Endothelial cell of umbilical vein (primary cell): ENCODE measurements at regions of chr14 and their contacts with region 1.

Region 1: DNA sequence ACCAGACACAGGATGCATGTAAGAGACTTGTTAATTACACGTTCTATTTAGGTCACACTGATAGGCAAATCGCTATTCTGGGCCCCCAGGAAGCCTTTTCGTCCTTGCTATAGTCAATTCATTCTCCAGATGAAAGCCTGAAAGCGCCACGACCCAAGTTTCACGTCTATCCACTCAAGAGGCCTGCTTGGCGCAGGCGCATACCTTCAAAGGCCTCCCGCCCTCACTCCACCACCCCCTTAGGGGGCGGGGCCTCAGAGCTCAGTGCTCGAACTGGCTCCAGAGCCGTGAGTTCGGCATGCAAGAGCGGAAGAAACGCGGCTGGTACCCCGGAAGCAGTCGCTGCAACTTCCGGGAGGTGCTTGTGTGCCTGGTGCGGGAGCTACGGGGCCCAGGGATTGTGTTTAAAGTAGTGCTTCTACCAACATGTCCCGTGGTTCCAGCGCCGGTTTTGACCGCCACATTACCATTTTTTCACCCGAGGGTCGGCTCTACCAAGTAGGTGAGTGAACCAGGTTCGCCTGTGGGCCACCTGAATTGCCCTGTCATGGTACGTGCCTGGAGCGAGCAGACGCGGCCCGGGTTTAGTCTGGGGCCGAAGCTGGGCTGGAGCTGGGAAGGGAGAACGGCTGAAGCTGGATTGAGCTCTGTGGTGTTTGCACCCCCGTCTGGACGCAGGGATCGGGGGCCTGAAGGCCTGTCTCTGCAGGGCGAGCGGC is at the start of gene PSMA6:
- DNase-seq: peak; percentile 100
- H3K4me3 ChIP-seq: peak within 1 kb of the TSS; percentile 69 to 87 (median 87)
- H3K27ac ChIP-seq: peak within 1 kb of the TSS; percentile 77
- H3K4me1 ChIP-seq: peaks cover 16% of the 10 kb centered on the region
- H3K27me3 ChIP-seq: no peaks in the 10 kb centered on the region
- CTCF ChIP-seq: no peak
- POLR2A ChIP-seq: peak; percentile 81
- total RNA-seq, gene PSMA6: 195 and 197 TPM in 2 replicates

Region 2: DNA sequence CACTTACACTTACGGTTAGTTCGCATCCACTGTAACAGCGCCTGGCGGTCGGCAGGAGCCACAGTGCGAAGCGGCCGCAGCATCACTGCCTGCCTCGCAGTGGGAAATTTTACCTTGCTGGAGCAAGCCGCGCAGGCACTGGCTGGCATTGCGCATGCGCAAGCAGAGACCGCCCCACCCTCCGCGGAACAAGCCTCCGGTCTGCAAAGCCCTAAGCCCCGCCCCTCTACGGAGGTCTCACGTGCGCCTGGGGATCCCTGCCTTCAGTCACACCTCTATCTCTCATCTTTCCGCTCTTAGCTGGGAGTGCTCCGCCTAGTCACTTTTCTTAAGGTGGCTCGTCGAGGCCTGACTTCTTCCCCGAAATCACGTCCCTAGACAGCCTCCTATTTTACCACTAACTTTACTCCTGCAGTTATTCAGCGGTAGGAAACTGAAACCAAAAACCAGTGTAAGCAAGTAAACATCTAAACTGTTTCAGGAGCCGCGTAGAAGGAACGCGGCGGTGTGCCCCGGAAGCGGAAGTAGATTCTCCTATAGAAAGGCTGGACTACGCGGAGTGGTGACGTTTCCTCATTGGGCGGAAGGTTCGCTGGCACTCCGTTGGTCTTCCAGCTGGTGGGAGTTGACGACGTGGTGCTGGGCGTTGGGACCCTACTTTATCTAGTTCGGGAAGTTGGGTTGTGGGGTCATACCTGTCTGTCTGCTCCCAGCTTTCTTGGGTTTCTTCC is 309.6 kb before region 1 on chr14 and contains the start of gene SRP54:
- CTCF ChIA-PET with region 1: interaction called, 4 read pairs
- POLR2A ChIA-PET with region 1: interaction called, 4 read pairs
- dilution Hi-C with region 1: no loop called
- intact Hi-C with region 1: loop called (anchors 10 kb)
- DNase-seq: peak; percentile 98
- H3K4me3 ChIP-seq: peak within 1 kb of the TSS; percentile 71 to 91 (median 85)
- H3K27ac ChIP-seq: peak within 1 kb of the TSS; percentile 94
- H3K4me1 ChIP-seq: peaks cover 15% of the 10 kb centered on the region
- H3K27me3 ChIP-seq: no peaks in the 10 kb centered on the region
- CTCF ChIP-seq: peak in 1 of 2 donors; percentile 50
- POLR2A ChIP-seq: peak; percentile 91
- total RNA-seq, gene SRP54: 60.7 and 63.7 TPM in 2 replicates

Region 3: DNA sequence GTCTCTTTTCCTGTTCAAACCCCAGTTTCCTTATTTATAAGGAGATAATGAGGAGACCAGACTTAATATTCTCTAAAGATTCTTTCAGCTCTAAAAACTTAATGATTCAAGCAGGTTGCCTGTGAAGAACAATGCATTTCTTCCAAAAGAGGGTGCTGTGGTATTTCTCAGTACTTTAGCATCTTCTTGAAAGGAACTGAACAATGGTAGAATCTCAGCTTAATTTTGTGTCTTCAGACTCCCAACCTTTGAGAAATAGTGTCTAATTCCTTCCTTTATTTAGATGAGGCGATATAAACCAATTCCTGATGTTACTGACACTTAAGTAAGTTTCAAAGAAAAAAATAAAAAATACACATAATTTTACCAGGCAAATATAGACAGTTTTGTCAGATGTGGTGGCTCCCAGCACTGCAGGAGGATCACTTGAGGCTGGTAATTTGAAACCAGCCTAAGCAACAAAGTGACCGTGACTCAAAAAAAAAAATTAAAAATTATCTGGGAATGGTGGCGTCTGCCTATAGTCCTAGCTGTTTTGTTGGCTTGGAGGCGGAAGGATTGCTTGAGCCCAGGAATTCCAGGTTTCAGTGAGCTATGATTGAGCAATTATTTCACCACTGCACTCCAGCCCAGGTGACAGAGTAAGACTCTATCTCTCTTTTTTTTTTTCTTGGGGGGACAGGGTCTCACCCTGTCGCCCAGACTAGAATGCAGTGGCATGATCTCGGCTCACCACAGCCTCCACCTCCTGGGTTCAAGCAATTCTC is 76.9 kb before region 1 on chr14:
- CTCF ChIA-PET with region 1: interaction called, 10 read pairs
- POLR2A ChIA-PET with region 1: no interaction called
- dilution Hi-C with region 1: no loop called
- intact Hi-C with region 1: no loop called
- DNase-seq: peak; percentile 62
- H3K4me3 ChIP-seq: no peak overlapping the region
- H3K27ac ChIP-seq: peak overlapping the region; percentile 41
- H3K4me1 ChIP-seq: peaks cover 20% of the 10 kb centered on the region
- H3K27me3 ChIP-seq: no peaks in the 10 kb centered on the region
- CTCF ChIP-seq: no peak
- POLR2A ChIP-seq: no peak

Region 4: GRCh38 chr14:35341446-35342159 is 49.4 kb after region 1 on chr14:
- CTCF ChIA-PET with region 1: interaction called, 3 read pairs
- POLR2A ChIA-PET with region 1: no interaction called
- dilution Hi-C with region 1: no loop called
- intact Hi-C with region 1: loop called (anchors 5 kb)
- DNase-seq: peak; percentile 91
- H3K4me3 ChIP-seq: no peak overlapping the region
- H3K27ac ChIP-seq: no peak overlapping the region
- H3K4me1 ChIP-seq: peaks cover 20% of the 10 kb centered on the region
- H3K27me3 ChIP-seq: no peaks in the 10 kb centered on the region
- CTCF ChIP-seq: no peak
- POLR2A ChIP-seq: no peak

Region 5: GRCh38 chr14:35385042-35385839 is 93.0 kb after region 1 on chr14:
- CTCF ChIA-PET with region 1: interaction called, 4 read pairs
- POLR2A ChIA-PET with region 1: no interaction called
- dilution Hi-C with region 1: no loop called
- intact Hi-C with region 1: loop called (anchors 1 kb)
- DNase-seq: peak; percentile 37
- H3K4me3 ChIP-seq: no peak overlapping the region
- H3K27ac ChIP-seq: peak overlapping the region; percentile 76
- H3K4me1 ChIP-seq: peaks cover 24% of the 10 kb centered on the region
- H3K27me3 ChIP-seq: no peaks in the 10 kb centered on the region
- CTCF ChIP-seq: no peak
- POLR2A ChIP-seq: no peak

Region 6: DNA sequence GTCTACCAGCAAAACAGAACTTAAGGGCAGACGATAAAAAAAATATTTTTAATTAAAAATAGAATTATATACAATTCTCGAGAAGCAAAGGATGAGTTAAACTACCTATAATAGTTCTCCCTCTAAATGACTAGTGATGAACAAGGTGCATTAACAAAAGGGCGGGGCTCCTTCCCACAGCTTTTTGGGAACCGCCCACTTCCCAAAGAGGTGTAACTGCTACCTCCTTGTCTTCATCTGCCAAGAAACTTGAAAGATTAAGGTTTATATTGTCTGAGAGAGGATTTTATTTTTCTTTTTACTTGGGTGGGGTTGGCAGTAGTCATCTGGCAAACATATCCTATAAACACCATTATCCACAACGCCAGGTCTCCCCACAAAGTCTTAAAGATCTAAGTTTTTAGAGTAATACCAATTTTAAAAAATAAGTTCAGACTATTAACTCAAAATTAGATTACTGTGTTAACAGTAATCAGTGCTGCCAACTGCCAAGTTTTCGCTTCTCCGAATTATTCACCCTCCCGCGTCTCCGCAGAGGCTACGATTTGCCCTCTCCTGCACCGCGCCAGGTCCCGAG is 516.0 kb after region 1 on chr14:
- CTCF ChIA-PET with region 1: no interaction called
- POLR2A ChIA-PET with region 1: no interaction called
- dilution Hi-C with region 1: no loop called
- intact Hi-C with region 1: loop called (anchors 10 kb)
- DNase-seq: peak; percentile 65
- H3K4me3 ChIP-seq: peak overlapping the region; percentile 54 to 91 (median 74)
- H3K27ac ChIP-seq: peak overlapping the region; percentile 18
- H3K4me1 ChIP-seq: peaks cover 8% of the 10 kb centered on the region
- H3K27me3 ChIP-seq: no peaks in the 10 kb centered on the region
- CTCF ChIP-seq: no peak
- POLR2A ChIP-seq: no peak